ENCODE measurements at regions of chr13 and their contacts with region 1.

Region 1: DNA sequence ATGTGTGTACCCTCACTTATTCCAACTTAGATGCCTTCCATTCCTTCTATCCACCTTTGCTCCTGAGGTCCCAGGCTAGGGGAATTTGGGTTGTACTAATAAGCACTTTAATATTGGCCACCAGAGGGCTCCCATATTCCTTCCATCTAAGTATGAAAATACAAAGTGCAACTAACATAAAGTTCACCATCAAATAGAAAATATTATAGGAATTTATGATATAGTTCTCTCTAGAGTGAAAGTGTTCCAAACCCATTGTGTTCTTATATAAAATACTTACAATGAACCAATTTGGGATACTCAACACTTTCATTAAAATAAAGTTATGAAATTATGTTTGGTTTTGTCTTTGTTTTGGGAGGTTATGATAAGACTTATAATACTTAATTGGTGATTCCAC is 62.3 kb downstream of the ITGBL1 start:
- DNase-seq: peak; percentile 63
- H3K4me3 ChIP-seq: no peak overlapping the region
- CTCF ChIP-seq: peak; percentile 68

Region 2: GRCh38 chr13:101739382-101740178 is 224.8 kb after region 1 on chr13:
- in situ Hi-C with region 1: loop called (anchors 10 kb)
- DNase-seq: no peak
- H3K4me3 ChIP-seq: no peak overlapping the region
- CTCF ChIP-seq: no peak

Measured in astrocyte of the cerebellum (primary cell).